ENCODE measurements at regions of chr4 and their contacts with region 1.

Region 1: GRCh38 chr4:16085822-16086221 is 2.0 kb upstream of the PROM1 start:
- DNase-seq: no peak
- ATAC-seq: no peak
- H3K4me3 ChIP-seq: no peak overlapping the region
- H3K27ac ChIP-seq: no peak overlapping the region
- H3K4me1 ChIP-seq: peaks cover 5 to 10% of the 10 kb centered on the region in 2 experiments; a peak in 2 of 4 replicates
- H3K27me3 ChIP-seq: peaks cover 49% of the 10 kb centered on the region
- CTCF ChIP-seq: no peak
- POLR2A ChIP-seq: no peak
- RAD21 ChIP-seq: no peak

Region 2: GRCh38 chr4:15963001-15963451 is 122.8 kb before region 1 on chr4 and contains the start of gene FGFBP2:
- CTCF ChIA-PET with region 1: no interaction called
- POLR2A ChIA-PET with region 1: no interaction called
- RAD21 ChIA-PET with region 1: no interaction called
- intact Hi-C with region 1: no loop called
- DNase-seq: peak; percentile 21
- ATAC-seq: peak; percentile 91
- H3K4me3 ChIP-seq: no peak within 1 kb of the TSS
- H3K27ac ChIP-seq: no peak within 1 kb of the TSS
- H3K4me1 ChIP-seq: peaks cover 0 to 7% of the 10 kb centered on the region in 2 experiments; a peak in 1 of 4 replicates
- H3K27me3 ChIP-seq: no peaks in the 10 kb centered on the region
- CTCF ChIP-seq: peak; percentile 63 to 74 (median 69)
- POLR2A ChIP-seq: no peak
- RAD21 ChIP-seq: peak; percentile 75
- total RNA-seq, gene FGFBP2: not detected

Region 3: DNA sequence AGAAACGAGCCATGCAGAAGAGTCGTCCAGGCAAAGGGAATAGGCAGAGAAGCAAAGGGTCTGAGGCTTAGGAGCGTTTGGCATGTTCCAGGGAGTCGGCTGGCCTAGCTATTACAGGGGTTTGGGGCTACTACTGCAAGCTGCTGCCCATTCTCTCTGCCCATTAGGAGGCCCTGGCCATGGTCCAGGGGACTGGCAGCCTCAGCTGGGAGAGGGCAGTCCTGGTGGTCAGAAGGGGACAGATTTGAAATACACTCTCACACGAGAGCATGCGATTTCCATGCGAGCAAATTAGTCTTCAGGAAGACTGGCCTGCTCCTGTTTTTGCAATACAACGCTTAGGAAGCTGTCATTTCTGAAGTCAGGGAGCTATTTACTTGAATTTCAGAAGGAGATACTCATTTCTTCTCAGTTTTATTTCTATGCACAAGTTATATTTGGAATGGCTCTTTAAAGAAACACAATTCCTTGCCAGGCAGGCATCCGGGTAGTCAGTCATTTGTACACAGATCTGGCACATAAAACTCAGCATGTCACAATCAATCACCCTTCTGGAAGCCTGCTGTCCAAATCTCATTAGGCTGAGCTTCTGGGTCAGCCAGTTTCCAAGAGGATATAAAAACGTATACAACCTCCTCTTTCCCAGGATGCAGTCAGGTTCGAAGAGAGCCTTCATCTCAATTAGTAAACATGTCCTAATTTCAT is 29.0 kb before region 1 on chr4:
- CTCF ChIA-PET with region 1: no interaction called
- POLR2A ChIA-PET with region 1: no interaction called
- RAD21 ChIA-PET with region 1: no interaction called
- intact Hi-C with region 1: no loop called
- DNase-seq: no peak
- ATAC-seq: no peak
- H3K4me3 ChIP-seq: no peak overlapping the region
- H3K27ac ChIP-seq: no peak overlapping the region
- H3K4me1 ChIP-seq: no peaks in the 10 kb centered on the region
- H3K27me3 ChIP-seq: no peaks in the 10 kb centered on the region
- CTCF ChIP-seq: no peak
- POLR2A ChIP-seq: no peak
- RAD21 ChIP-seq: no peak

Region 4: DNA sequence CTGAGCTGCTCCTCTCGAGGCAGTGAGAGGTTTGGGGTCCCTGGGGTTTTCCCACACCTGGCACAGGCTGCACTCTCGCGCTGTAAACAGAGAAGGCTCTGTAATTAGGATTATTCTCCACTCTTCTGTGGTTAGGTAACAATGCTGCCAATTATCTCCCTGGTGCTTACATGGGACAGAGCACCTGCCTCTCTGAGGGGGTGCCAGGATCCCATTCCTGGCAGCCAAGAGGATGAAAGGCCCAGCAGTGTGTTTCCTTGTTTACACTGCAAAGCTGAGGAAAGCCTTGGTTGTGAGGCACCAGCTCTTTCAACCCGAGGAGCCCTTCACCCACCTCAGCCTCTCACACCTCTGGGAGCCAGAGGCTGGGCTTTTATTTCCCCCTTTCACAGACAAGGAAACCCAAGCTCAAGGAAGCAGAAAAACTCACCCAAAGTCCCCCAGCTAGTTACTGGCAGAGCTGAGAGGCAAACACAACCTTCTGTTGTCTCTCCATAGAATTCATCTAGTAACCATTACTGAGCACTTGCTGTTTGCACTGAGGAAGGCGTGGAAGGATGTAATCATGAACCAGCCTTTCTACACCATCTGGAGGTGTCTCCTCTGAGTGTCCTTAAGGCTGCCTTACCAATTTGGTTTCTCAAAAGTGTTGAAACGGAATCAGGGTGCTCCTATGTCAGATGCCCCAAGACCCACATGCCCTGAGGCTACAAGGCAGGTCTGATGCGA is 37.7 kb after region 1 on chr4:
- CTCF ChIA-PET with region 1: no interaction called
- POLR2A ChIA-PET with region 1: no interaction called
- RAD21 ChIA-PET with region 1: no interaction called
- intact Hi-C with region 1: loop called (anchors 1 kb)
- DNase-seq: no peak
- ATAC-seq: no peak
- H3K4me3 ChIP-seq: no peak overlapping the region
- H3K27ac ChIP-seq: no peak overlapping the region
- H3K4me1 ChIP-seq: no peaks in the 10 kb centered on the region
- H3K27me3 ChIP-seq: 0 out of 2 replicates have a peak, but pooled peaks cover 6% of the 10 kb centered on the region
- CTCF ChIP-seq: no peak
- POLR2A ChIP-seq: no peak
- RAD21 ChIP-seq: no peak

Measured in HCT116 (cell line).